Natural killer cell (primary cell): ENCODE measurements at regions of chr3 and their contacts with region 1.

Region 1: DNA sequence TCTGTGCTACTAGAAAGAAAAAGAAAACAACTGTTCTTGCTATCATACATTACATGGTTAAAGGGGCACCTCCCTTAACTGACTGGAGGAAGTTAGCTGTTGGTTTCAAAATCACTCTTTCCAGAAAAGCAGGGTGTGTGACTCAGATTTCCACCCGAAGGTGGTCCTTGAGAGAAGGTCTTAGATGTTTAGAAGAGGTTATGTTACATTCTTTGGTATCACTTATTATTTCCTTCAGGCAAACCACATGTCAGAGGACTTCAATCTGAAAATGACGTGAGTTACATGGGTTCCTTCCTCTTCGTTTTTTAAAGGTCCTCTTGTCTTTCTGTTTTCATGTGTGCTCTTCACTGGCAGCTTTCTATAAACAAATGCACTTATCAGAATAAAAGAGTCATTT is 307.9 kb upstream of the CBLB start:
- DNase-seq: peak in 1 of 2 donors; percentile 76
- ATAC-seq: peak; percentile 74 to 78 (median 76)
- H3K4me3 ChIP-seq: peak overlapping the region; percentile 29
- H3K4me3 Mint-ChIP-seq: peak overlapping the region; percentile 81
- H3K27ac ChIP-seq: peak overlapping the region; percentile 79
- H3K27ac Mint-ChIP-seq: peak overlapping the region; percentile 93
- H3K4me1 ChIP-seq: peaks cover 11% of the 10 kb centered on the region
- H3K4me1 Mint-ChIP-seq: peaks cover 42 to 47% of the 10 kb centered on the region in 2 donors
- H3K27me3 ChIP-seq: no peaks in the 10 kb centered on the region
- H3K27me3 Mint-ChIP-seq: no peaks in the 10 kb centered on the region
- CTCF ChIP-seq: no peak

Region 2: DNA sequence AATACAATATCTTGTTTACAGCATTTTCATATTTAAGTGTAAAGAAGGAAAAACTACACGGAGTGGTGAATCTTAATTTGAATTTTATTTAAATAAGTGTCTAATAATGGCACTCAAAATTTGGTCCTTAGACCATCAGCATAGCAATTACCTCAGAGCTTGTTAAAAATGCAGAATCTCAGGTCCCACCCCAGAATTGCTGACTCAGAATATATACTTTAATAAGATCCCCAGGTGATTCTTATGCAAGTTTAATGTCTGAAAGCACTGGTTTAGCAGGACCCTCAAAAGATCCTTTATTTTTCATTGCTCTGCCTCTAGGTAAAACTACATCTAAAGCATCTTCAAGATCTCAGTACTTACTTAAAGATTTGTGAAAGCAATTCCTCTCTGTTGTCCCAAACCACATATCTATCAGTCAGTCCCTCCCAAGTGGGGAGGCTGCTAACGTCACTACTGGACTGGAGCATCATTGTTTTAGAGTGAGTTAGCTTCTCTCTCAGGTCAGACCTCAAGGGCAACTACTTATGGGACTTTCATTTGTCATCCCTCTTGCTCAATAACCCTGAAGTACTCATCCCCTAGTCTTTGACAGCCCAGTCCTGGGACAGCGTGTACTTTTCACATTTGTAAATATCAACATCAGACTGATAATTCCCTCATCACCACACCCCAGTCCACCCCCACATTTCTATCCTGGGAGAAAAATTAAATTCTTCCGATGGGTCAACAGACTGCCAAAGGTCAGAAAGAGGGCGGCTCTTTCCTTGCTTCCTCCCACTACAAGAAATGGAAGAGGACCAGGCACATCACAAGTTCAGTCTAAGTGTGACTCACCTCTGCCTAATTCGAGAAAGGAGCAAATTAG is 384.6 kb before region 1 on chr3:
- intact Hi-C with region 1: no loop called
- DNase-seq: peak in 1 of 2 donors; percentile 40
- ATAC-seq: peak in 1 of 3 donors; percentile 50
- H3K4me3 ChIP-seq: no peak overlapping the region
- H3K4me3 Mint-ChIP-seq: no peak overlapping the region
- H3K27ac ChIP-seq: no peak overlapping the region
- H3K27ac Mint-ChIP-seq: peak overlapping the region; percentile 60 to 82
- H3K4me1 ChIP-seq: peaks cover 4% of the 10 kb centered on the region
- H3K4me1 Mint-ChIP-seq: peaks cover 54 to 66% of the 10 kb centered on the region in 2 donors
- H3K27me3 ChIP-seq: no peaks in the 10 kb centered on the region
- H3K27me3 Mint-ChIP-seq: no peaks in the 10 kb centered on the region
- CTCF ChIP-seq: no peak

Region 3: GRCh38 chr3:106030618-106030945 is 146.2 kb before region 1 on chr3:
- intact Hi-C with region 1: loop called (anchors 10 kb)
- DNase-seq: no peak
- ATAC-seq: no peak
- H3K4me3 ChIP-seq: no peak overlapping the region
- H3K4me3 Mint-ChIP-seq: no peak overlapping the region
- H3K27ac ChIP-seq: no peak overlapping the region
- H3K27ac Mint-ChIP-seq: no peak overlapping the region
- H3K4me1 ChIP-seq: no peaks in the 10 kb centered on the region
- H3K4me1 Mint-ChIP-seq: peaks cover 14 to 25% of the 10 kb centered on the region in 2 donors
- H3K27me3 ChIP-seq: no peaks in the 10 kb centered on the region
- H3K27me3 Mint-ChIP-seq: peaks cover 0 to 9% of the 10 kb centered on the region in 2 donors
- CTCF ChIP-seq: no peak

Region 4: GRCh38 chr3:106068795-106069194 is 107.9 kb before region 1 on chr3:
- intact Hi-C with region 1: loop called (anchors 10 kb)
- DNase-seq: peak in 1 of 2 donors; percentile 60
- ATAC-seq: peak; percentile 95 to 99 (median 97)
- H3K4me3 ChIP-seq: no peak overlapping the region
- H3K4me3 Mint-ChIP-seq: peak overlapping the region; percentile 73
- H3K27ac ChIP-seq: peak overlapping the region; percentile 82
- H3K27ac Mint-ChIP-seq: peak overlapping the region; percentile 90 to 93
- H3K4me1 ChIP-seq: peaks cover 11% of the 10 kb centered on the region
- H3K4me1 Mint-ChIP-seq: peaks cover 18 to 21% of the 10 kb centered on the region in 2 donors
- H3K27me3 ChIP-seq: no peaks in the 10 kb centered on the region
- H3K27me3 Mint-ChIP-seq: no peaks in the 10 kb centered on the region
- CTCF ChIP-seq: no peak

Region 5: GRCh38 chr3:106333911-106334618 is 157.3 kb after region 1 on chr3:
- intact Hi-C with region 1: loop called (anchors 10 kb)
- DNase-seq: peak in 1 of 2 donors; percentile 55
- ATAC-seq: peak; percentile 58 to 83 (median 80)
- H3K4me3 ChIP-seq: no peak overlapping the region
- H3K4me3 Mint-ChIP-seq: peak overlapping the region; percentile 64
- H3K27ac ChIP-seq: no peak overlapping the region
- H3K27ac Mint-ChIP-seq: peak overlapping the region; percentile 46 to 75
- H3K4me1 ChIP-seq: peaks cover 6% of the 10 kb centered on the region
- H3K4me1 Mint-ChIP-seq: peaks cover 40 to 47% of the 10 kb centered on the region in 2 donors
- H3K27me3 ChIP-seq: no peaks in the 10 kb centered on the region
- H3K27me3 Mint-ChIP-seq: no peaks in the 10 kb centered on the region
- CTCF ChIP-seq: no peak